ENCODE measurements at regions of chr7 and their contacts with region 1.

Region 1: DNA sequence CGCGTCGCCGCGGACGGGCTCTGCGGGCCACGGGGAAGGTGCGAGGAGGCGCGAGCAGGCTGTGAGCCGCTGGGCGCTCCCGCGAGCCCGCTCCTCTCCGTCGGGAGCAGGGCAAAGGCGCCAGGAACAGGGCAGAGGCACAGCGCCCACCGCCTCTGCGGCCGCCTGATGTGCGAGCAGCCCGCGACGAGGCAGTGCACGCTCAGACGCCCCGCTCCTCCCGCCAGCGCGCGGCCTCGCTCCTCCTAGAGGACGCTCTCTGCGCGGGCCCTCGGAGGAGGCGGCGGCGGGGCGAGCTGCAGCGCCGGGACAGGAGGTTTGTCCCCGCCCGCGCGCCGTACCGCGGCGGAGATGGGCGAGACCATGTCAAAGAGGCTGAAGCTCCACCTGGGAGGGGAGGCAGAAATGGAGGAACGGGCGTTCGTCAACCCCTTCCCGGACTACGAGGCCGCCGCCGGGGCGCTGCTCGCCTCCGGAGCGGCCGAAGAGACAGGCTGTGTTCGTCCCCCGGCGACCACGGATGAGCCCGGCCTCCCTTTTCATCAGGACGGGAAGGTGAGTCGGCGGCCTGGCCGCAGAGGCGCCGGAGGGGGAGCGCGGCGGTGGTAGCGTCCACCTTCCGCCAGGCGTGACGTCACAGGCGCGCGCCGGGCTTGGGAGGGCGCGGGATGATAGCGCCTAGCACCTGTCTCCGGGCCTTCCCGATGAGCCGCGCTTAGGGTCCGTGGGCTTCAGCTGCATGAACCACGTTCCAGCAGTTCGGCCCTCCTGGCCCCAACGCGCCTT is 731 bp downstream of the LANCL2 start:
- DNase-seq: peak; percentile 94
- H3K4me3 Mint-ChIP-seq: peak overlapping the region; percentile 98
- H3K27ac Mint-ChIP-seq: peak overlapping the region; percentile 98
- H3K4me1 Mint-ChIP-seq: peaks cover 19% of the 10 kb centered on the region
- H3K27me3 Mint-ChIP-seq: peaks cover 8% of the 10 kb centered on the region

Region 2: DNA sequence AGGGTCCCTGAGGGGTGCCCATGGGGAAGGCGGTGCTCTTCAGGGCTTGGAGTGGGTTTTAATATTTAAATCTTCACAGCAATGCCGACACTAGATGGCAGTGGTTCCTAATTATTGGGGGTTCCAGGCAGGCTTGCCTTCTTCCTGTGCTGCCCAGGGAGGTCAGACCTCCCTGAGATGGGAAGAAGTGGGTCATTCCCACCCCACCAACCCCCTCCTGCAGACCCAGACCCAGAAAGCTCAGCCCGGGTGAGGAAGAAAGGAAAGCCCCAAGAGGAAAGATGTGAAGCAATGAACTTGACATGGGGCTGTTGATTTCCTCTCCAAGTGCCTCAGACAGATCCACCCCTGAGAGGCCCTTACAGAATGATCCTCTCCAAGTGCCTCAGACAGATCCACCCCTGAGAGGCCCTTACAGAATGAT is 85.8 kb before region 1 on chr7:
- intact Hi-C with region 1: loop called (anchors 1 kb)
- DNase-seq: peak; percentile 29
- H3K4me3 Mint-ChIP-seq: no peak overlapping the region
- H3K27ac Mint-ChIP-seq: no peak overlapping the region
- H3K4me1 Mint-ChIP-seq: peaks cover 5% of the 10 kb centered on the region
- H3K27me3 Mint-ChIP-seq: peaks cover 5% of the 10 kb centered on the region

Region 3: DNA sequence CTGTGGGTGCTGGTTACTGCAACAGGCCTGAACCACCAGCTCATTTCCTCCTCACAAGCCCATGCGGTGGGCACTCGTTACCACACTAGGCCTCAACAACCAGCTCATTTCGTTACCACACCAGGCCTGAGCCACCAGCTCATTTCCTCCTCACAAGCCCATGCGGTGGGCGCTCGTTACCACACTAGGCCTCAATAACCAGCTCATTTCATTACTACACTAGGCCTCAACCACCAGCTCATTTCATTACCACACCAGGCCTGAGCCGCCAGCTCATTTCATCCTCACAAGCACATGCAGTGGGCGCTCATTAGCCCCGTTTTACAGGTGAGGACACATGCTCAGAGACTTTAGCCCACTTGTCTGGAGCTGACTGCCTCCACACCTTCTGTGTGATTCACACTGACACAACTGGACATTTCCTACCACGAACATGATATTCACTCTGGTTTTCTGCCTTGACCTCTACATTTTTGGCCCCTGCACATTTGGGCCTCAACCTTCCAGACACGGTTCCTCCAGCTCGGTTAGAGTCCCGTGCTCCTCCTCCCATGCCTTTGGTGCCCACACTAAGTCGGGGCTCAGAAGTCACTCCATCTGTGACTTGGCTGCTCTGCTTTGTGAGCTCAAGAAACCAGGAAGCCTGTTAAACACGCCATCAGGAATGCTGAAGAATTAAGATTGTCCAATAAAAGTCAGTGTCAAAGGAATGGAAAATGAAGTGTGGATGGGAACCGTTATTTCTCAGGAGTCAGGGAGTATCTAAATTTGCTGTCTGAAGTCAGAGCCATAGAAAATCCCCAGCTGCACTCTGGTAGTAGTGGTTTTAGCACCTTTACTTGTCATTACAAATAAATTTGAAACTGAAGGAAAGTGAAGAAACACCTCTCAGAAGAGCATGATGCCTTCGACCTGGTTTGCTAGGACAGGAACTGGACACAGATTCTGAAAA is 56.6 kb before region 1 on chr7:
- intact Hi-C with region 1: loop called (anchors 1 kb)
- DNase-seq: peak; percentile 61
- H3K4me3 Mint-ChIP-seq: peak overlapping the region; percentile 20
- H3K27ac Mint-ChIP-seq: peak overlapping the region; percentile 93
- H3K4me1 Mint-ChIP-seq: peaks cover 36% of the 10 kb centered on the region
- H3K27me3 Mint-ChIP-seq: peaks cover 20% of the 10 kb centered on the region

Region 4: DNA sequence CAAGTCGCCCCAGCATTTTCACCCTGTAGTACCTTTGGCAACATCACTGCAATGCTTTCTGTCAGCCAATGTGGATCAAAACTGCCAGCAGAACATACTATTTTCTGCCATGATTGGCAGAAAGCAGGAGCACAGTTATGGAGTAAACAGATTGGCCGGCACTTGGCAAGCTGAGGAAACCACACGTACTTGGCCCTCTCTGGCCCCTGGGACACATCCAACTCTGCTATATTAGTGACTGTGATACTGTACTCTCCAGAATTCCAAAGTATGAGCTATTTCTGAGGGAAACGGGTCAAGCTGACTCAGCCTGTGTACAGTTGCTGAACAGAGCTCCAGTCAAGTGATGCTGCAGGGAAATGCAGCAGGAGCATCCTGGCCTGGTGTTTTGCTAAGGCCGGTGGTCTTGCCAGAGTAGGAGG is 40.5 kb before region 1 on chr7:
- intact Hi-C with region 1: no loop called
- DNase-seq: no peak
- H3K4me3 Mint-ChIP-seq: no peak overlapping the region
- H3K27ac Mint-ChIP-seq: no peak overlapping the region
- H3K4me1 Mint-ChIP-seq: no peaks in the 10 kb centered on the region
- H3K27me3 Mint-ChIP-seq: peaks cover 20% of the 10 kb centered on the region

Region 5: GRCh38 chr7:55415173-55415778 is 49.4 kb after region 1 on chr7:
- intact Hi-C with region 1: loop called (anchors 1 kb)
- DNase-seq: peak; percentile 65
- H3K4me3 Mint-ChIP-seq: no peak overlapping the region
- H3K27ac Mint-ChIP-seq: peak overlapping the region; percentile 20
- H3K4me1 Mint-ChIP-seq: peaks cover 4% of the 10 kb centered on the region
- H3K27me3 Mint-ChIP-seq: no peaks in the 10 kb centered on the region

Region 6: DNA sequence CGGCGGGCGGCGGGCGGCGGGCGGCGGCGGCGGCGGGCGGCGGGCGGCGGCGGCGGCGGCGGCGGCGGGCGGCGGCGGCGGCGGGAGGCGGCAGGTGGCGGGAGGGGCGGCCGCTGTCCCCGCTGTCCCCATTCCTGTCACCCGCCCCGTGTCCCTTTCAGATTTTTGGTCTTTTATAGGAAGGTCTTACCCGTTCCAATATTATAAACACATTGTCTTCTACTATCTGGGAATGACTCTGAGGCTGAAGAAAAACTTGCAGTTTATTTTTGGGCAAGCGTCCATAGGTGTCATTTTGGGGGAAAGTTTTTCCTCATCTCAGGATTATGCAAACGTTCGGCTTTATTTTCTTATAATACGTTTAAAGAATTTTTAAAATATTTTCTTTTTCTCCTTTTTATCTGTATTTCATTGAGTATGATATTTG is 522.0 kb after region 1 on chr7:
- intact Hi-C with region 1: loop called (anchors 5 kb)
- DNase-seq: no peak
- H3K4me3 Mint-ChIP-seq: peak overlapping the region; percentile 87
- H3K27ac Mint-ChIP-seq: peak overlapping the region; percentile 84
- H3K4me1 Mint-ChIP-seq: peaks cover 5% of the 10 kb centered on the region
- H3K27me3 Mint-ChIP-seq: peaks cover 2% of the 10 kb centered on the region

Region 7: GRCh38 chr7:55951637-55952351 is 585.9 kb after region 1 on chr7 and contains the start of gene MRPS17:
- intact Hi-C with region 1: loop called (anchors 2 kb)
- DNase-seq: peak; percentile 92
- H3K4me3 Mint-ChIP-seq: peak within 1 kb of the TSS; percentile 92
- H3K27ac Mint-ChIP-seq: peak within 1 kb of the TSS; percentile 92
- H3K4me1 Mint-ChIP-seq: peaks cover 10% of the 10 kb centered on the region
- H3K27me3 Mint-ChIP-seq: no peaks in the 10 kb centered on the region
- total RNA-seq, gene MRPS17: 38.2 and 39.3 TPM in 2 replicates

Region 8: DNA sequence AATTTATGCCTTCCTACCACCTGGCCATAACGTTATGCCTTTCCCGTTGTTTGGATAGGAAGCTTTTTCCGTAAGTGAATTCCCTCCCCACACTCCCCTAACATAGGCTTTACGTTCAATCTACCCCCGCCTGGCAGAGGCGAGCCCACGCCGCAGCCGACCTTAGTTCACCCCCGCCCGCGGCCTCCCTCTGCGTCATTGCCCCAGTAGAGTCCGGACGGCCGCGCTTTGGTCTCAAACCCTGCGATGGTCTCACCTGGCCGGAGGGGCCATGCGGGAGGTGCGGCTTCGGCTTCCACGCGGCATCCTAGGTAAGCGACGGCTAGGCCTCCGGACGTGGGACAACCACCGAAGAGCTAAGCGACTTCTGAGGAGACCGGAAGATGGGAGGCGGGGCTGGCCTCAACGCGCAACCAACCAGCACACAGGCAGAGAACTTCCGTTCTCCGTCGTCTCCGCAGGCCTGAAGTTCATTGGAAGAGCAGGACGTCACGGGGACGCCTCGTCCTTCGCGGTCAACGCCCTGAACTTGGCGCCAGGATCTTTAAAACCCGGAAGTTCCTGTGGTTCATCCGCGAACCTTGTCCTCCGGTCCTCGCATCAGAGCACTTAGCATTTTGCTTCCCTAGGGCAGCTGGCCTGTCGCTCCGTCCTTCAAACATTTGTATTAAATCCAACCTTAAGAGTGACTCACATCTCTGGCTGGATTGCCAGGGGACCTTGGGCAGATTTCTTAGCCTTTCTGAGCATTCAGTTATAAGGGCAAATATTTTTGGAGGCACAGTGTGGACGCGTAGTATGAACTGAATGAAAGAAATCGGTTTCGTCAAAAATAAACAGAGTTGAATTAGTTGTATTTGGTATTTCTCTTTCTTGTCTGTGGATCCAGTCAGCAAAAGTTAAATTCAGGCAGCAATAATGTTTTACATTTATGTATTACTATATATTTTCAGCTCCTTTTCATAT is 740.5 kb after region 1 on chr7 and contains the start of gene CHCHD2:
- intact Hi-C with region 1: loop called (anchors 1 kb)
- DNase-seq: peak; percentile 92
- H3K4me3 Mint-ChIP-seq: peak within 1 kb of the TSS; percentile 95
- H3K27ac Mint-ChIP-seq: peak within 1 kb of the TSS; percentile 94
- H3K4me1 Mint-ChIP-seq: peaks cover 21% of the 10 kb centered on the region
- H3K27me3 Mint-ChIP-seq: no peaks in the 10 kb centered on the region
- total RNA-seq, gene CHCHD2: 613 and 617 TPM in 2 replicates